H1 (cell line): ENCODE measurements at regions of chr1 and their contacts with region 1.

Region 1: DNA sequence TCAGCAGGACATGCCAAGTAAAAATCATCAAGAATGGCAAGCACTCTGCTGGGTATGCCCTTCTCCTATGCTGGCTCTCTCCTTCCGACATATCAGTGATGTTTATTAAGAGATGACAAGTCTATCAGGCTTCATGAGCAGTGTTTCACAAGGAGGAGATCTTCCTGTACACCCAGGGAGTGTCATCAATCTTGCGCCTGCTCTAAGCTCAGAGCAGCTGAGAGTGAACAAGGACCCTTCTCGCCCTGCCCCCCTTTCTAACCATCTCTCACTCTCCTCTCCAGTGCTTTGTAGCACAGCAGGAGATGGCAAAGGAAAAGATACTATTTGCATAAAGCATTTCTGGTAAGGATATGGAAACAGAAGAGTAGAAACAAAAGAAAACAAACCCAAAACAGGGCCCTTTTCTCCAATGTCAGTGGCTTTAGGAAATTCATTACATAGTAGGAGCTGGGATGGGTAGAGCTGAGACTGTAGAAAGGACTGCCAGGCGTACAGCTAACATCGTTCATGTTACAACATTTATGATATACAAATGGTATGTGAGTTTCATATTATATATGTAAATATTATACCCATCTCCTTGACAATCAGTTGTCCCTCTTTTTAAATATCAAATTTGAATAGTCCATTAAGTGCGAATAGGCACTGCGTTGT is 201.7 kb downstream of the NUF2 start:
- DNase-seq: no peak
- H3K4me3 ChIP-seq: no peak overlapping the region
- H3K27ac ChIP-seq: no peak overlapping the region
- H3K4me1 ChIP-seq: peaks cover 0 to 4% (median 0%) of the 10 kb centered on the region in 4 experiments; a peak in 3 of 7 replicates
- H3K27me3 ChIP-seq: 0 out of 7 replicates have a peak, but pooled peaks cover 0 to 2% (median 0%) of the 10 kb centered on the region in 4 experiments
- CTCF ChIP-seq: no peak
- EP300 ChIP-seq: no peak
- POLR2A ChIP-seq: no peak
- RAD21 ChIP-seq: no peak

Region 2: GRCh38 chr1:163509114-163509513 is 14.4 kb before region 1 on chr1:
- CTCF ChIA-PET with region 1: interaction called, 15 read pairs
- POLR2A ChIA-PET with region 1: no interaction called
- DNase-seq: no peak
- H3K4me3 ChIP-seq: no peak overlapping the region
- H3K27ac ChIP-seq: no peak overlapping the region
- H3K4me1 ChIP-seq: peaks cover 0 to 12% (median 8%) of the 10 kb centered on the region in 4 experiments; a peak in 3 of 7 replicates
- H3K27me3 ChIP-seq: no peaks in the 10 kb centered on the region
- CTCF ChIP-seq: no peak
- EP300 ChIP-seq: no peak
- POLR2A ChIP-seq: no peak
- RAD21 ChIP-seq: no peak

Region 3: GRCh38 chr1:163535807-163536206 is 12.3 kb after region 1 on chr1:
- CTCF ChIA-PET with region 1: interaction called, 22 read pairs
- POLR2A ChIA-PET with region 1: no interaction called
- DNase-seq: no peak
- H3K4me3 ChIP-seq: no peak overlapping the region
- H3K27ac ChIP-seq: no peak overlapping the region
- H3K4me1 ChIP-seq: peaks cover 0 to 9% (median 1%) of the 10 kb centered on the region in 4 experiments; a peak in 1 of 7 replicates
- H3K27me3 ChIP-seq: no peaks in the 10 kb centered on the region
- CTCF ChIP-seq: peak in 1 of 3 experiments; percentile 48; a peak in 2 of 4 replicates
- EP300 ChIP-seq: no peak
- POLR2A ChIP-seq: no peak
- RAD21 ChIP-seq: peak; percentile 76 to 84

Region 4: GRCh38 chr1:163730411-163730821 is 206.9 kb after region 1 on chr1:
- CTCF ChIA-PET with region 1: no interaction called
- POLR2A ChIA-PET with region 1: no interaction called
- DNase-seq: no peak
- H3K4me3 ChIP-seq: no peak overlapping the region
- H3K27ac ChIP-seq: no peak overlapping the region
- H3K4me1 ChIP-seq: no peaks in the 10 kb centered on the region
- H3K27me3 ChIP-seq: no peaks in the 10 kb centered on the region
- CTCF ChIP-seq: no peak
- EP300 ChIP-seq: no peak
- POLR2A ChIP-seq: no peak
- RAD21 ChIP-seq: no peak